Ovary (tissue), 10 donors: ENCODE measurements at regions of chr16 and their contacts with region 1.

Region 1: DNA sequence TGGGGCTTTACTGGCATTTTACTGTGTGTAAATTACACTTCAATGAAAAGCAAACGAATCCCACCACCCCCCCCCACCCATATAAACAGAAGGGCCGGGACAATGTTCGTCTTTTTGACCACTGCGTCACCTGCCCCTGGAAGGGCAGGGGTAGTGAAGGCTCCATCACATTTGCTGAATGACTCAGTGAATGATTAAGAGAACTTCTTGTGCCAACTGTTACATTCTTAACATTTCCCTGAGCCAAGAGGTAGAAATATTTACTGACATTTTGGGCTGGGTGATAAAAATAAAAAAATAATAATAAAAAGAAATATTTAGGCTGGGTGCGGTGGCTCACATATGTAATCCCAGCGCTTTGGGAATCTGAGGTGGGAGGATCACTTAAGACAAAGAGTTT is 24.1 kb downstream of the C16orf96 start:
- DNase-seq: no peak
- H3K4me3 ChIP-seq: no peak overlapping the region
- H3K27ac ChIP-seq: no peak overlapping the region
- H3K4me1 ChIP-seq: no peaks in the 10 kb centered on the region
- H3K27me3 ChIP-seq: no peaks in the 10 kb centered on the region
- CTCF ChIP-seq: no peak
- EP300 ChIP-seq: no peak
- POLR2A ChIP-seq: no peak

Region 2: DNA sequence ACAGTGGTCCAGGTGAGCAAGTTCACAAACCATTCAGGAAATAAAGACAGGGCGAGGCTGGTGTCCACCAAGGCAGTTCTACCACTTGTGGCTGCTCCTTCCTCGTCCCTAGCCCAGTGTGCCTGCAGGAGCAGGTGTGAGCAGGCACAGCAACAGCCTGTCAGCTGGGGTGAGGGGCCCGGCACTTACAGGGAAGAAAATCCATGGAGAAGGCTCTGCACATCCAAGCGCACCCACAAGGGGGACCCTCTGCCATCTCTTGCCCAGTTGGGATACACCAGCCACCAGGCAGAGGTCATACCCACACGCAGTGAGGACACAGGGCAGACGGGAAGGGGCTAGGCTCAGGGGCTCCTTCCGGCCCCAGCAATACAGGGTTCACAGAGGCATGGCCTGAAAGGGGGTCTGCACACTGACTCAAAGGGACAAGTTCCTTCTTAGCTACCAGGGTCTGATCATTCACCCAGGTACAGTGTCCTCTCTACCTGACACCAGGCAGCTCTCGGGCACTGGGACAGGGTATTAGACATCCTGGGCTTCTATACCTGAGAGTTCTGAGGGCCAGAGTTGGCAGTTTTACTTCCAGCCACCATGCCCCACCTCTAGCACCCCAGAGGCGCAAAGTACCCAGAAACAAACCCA is 68.7 kb before region 1 on chr16:
- intact Hi-C with region 1: loop called in 2 of 4 experiments (anchors 10 kb)
- DNase-seq: peak in 1 of 5 donors; percentile 54
- H3K4me3 ChIP-seq: no peak overlapping the region
- H3K27ac ChIP-seq: no peak overlapping the region
- H3K4me1 ChIP-seq: no peaks in the 10 kb centered on the region
- H3K27me3 ChIP-seq: no peaks in the 10 kb centered on the region
- CTCF ChIP-seq: no peak
- EP300 ChIP-seq: no peak
- POLR2A ChIP-seq: no peak